IMR-90 (cell line): ENCODE measurements at regions of chr7 and their contacts with region 1.

Region 1: GRCh38 chr7:34133983-34134782 is 228.8 kb downstream of the BMPER start:
- DNase-seq: peak; percentile 84
- ATAC-seq: peak; percentile 82
- H3K4me3 ChIP-seq: no peak overlapping the region
- H3K27ac ChIP-seq: peak overlapping the region; percentile 79
- H3K4me1 ChIP-seq: peaks cover 13% of the 10 kb centered on the region; the same call in 1 of the 2 replicates
- H3K27me3 ChIP-seq: no peaks in the 10 kb centered on the region
- CTCF ChIP-seq: peak; percentile 91
- POLR2A ChIP-seq: peak; percentile 52; the same call in 1 of the 2 replicates
- RAD21 ChIP-seq: peak; percentile 96

Region 2: DNA sequence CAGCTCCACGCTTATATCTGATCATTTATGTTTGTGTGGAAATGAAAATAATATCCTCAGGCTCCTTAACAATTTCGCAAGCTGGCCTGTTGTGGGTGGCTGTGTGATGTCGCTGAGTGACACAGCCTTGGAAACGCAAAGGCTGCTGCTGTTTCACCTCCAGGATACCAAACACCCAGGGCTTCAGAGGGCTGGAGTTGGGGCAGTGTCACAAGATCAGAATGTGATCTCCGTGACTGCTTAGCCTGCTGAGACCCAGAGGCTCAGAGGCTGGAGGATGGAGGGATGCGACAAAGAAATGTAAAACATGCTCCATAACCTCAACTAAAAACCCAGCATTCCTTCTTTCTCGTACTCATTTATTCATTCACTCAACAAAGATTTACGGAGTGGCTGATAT is 266.0 kb before region 1 on chr7:
- CTCF ChIA-PET with region 1: no interaction called
- POLR2A ChIA-PET with region 1: no interaction called
- dilution Hi-C with region 1: no loop called
- in situ Hi-C with region 1: no loop called
- intact Hi-C with region 1: no loop called
- DNase-seq: peak; percentile 69
- ATAC-seq: peak; percentile 85
- H3K4me3 ChIP-seq: no peak overlapping the region
- H3K27ac ChIP-seq: no peak overlapping the region
- H3K4me1 ChIP-seq: peaks cover 4% of the 10 kb centered on the region
- H3K27me3 ChIP-seq: no peaks in the 10 kb centered on the region
- CTCF ChIP-seq: no peak
- POLR2A ChIP-seq: no peak
- RAD21 ChIP-seq: no peak

Region 3: DNA sequence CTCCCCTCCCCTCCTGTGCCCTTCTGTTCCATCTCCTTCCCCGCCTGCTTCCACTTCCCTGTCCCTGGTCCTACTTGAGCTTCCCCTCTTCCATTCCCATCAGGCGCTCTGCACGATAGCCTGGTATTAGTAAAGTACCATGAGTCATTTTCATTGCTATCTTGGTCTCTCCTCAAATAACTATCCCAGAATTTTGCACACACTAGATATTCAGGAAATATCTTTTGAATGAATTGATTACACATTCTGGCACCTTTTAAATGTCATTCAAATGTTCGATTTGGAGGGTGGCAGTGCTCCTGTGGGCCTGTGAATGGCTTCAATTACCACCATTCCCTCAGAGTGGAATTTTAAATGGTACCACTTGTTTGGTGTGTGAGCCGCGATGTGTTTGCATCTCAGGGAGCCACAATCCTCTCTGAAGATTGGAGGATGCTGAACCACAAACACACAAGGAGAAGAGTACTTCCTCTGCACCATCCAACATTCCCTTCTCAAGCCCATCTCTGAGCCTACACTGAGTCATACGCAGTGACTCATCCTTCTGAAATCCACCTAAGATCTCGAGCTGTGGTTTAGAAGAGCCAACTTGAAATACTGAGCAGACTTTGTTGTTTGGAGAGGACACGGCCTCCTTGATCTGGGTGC is 147.1 kb before region 1 on chr7:
- CTCF ChIA-PET with region 1: interaction called, 12 read pairs
- POLR2A ChIA-PET with region 1: no interaction called
- dilution Hi-C with region 1: no loop called
- in situ Hi-C with region 1: no loop called
- intact Hi-C with region 1: loop called (anchors 10 kb)
- DNase-seq: peak; percentile 100
- ATAC-seq: peak; percentile 94
- H3K4me3 ChIP-seq: no peak overlapping the region
- H3K27ac ChIP-seq: peak overlapping the region; percentile 83
- H3K4me1 ChIP-seq: peaks cover 6% of the 10 kb centered on the region
- H3K27me3 ChIP-seq: no peaks in the 10 kb centered on the region
- CTCF ChIP-seq: no peak
- POLR2A ChIP-seq: no peak
- RAD21 ChIP-seq: peak; percentile 6; the same call in 1 of the 2 replicates

Region 4: GRCh38 chr7:34165929-34166550 is 31.9 kb after region 1 on chr7:
- CTCF ChIA-PET with region 1: interaction called, 3 read pairs
- POLR2A ChIA-PET with region 1: no interaction called
- dilution Hi-C with region 1: no loop called
- in situ Hi-C with region 1: no loop called
- intact Hi-C with region 1: loop called (anchors 2 kb)
- DNase-seq: peak; percentile 60
- ATAC-seq: peak; percentile 82
- H3K4me3 ChIP-seq: no peak overlapping the region
- H3K27ac ChIP-seq: no peak overlapping the region
- H3K4me1 ChIP-seq: peaks cover 2% of the 10 kb centered on the region; the same call in 1 of the 2 replicates
- H3K27me3 ChIP-seq: no peaks in the 10 kb centered on the region
- CTCF ChIP-seq: peak; percentile 76
- POLR2A ChIP-seq: no peak
- RAD21 ChIP-seq: peak; percentile 74

Region 5: GRCh38 chr7:34184466-34184865 is 50.3 kb after region 1 on chr7:
- CTCF ChIA-PET with region 1: no interaction called
- POLR2A ChIA-PET with region 1: no interaction called
- dilution Hi-C with region 1: no loop called
- in situ Hi-C with region 1: no loop called
- intact Hi-C with region 1: no loop called
- DNase-seq: peak; percentile 53
- ATAC-seq: peak; percentile 75
- H3K4me3 ChIP-seq: no peak overlapping the region
- H3K27ac ChIP-seq: no peak overlapping the region
- H3K4me1 ChIP-seq: peaks cover 3% of the 10 kb centered on the region; the same call in 1 of the 2 replicates
- H3K27me3 ChIP-seq: no peaks in the 10 kb centered on the region; the same call in 1 of the 2 replicates
- CTCF ChIP-seq: 0 out of 2 replicates have a peak, but pooled peaks have one; percentile 14
- POLR2A ChIP-seq: no peak
- RAD21 ChIP-seq: no peak

Region 6: GRCh38 chr7:34315032-34315431 is 180.8 kb after region 1 on chr7:
- CTCF ChIA-PET with region 1: no interaction called
- POLR2A ChIA-PET with region 1: no interaction called
- dilution Hi-C with region 1: no loop called
- in situ Hi-C with region 1: loop called (anchors 10 kb)
- intact Hi-C with region 1: loop called (anchors 5 kb)
- DNase-seq: peak; percentile 83
- ATAC-seq: peak; percentile 78
- H3K4me3 ChIP-seq: no peak overlapping the region
- H3K27ac ChIP-seq: peak overlapping the region; percentile 43; the same call in 1 of the 2 replicates
- H3K4me1 ChIP-seq: peaks cover 7% of the 10 kb centered on the region; the same call in 1 of the 2 replicates
- H3K27me3 ChIP-seq: no peaks in the 10 kb centered on the region
- CTCF ChIP-seq: no peak
- POLR2A ChIP-seq: no peak
- RAD21 ChIP-seq: no peak

Region 7: DNA sequence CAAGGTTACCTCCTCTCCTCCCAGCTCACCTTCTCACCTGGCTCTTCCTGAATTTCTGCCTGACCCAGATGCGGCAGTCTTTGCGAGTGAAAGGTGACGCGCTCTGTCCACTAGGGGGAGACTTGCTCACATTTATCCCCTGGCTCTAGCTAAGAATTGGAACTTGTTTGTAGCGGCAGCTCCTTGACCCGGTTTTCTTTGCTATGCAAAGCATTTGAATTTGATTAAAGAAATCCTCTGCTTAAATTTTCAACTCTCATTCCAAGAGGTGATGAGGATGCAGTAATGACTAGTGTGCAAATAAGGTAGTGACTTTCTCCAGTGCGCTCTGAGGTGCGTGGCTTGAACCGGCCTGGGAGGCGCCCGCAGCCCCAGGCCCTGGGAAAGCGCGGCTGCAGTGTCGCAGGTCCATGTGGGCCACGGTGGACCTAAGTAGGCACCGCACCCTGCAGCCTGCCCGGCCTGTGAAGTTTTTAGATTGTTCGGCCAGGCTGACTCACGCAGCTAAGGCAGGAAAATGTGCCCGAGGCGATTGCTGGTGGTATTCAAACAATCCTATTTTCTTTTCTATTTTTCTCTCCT is 186.9 kb after region 1 on chr7:
- CTCF ChIA-PET with region 1: interaction called, 5 read pairs
- POLR2A ChIA-PET with region 1: no interaction called
- dilution Hi-C with region 1: no loop called
- in situ Hi-C with region 1: loop called (anchors 10 kb)
- intact Hi-C with region 1: loop called (anchors 5 kb)
- DNase-seq: peak; percentile 58
- ATAC-seq: peak; percentile 93
- H3K4me3 ChIP-seq: no peak overlapping the region
- H3K27ac ChIP-seq: no peak overlapping the region
- H3K4me1 ChIP-seq: peaks cover 5% of the 10 kb centered on the region
- H3K27me3 ChIP-seq: no peaks in the 10 kb centered on the region
- CTCF ChIP-seq: peak; percentile 80
- POLR2A ChIP-seq: no peak
- RAD21 ChIP-seq: peak; percentile 66

Region 8: DNA sequence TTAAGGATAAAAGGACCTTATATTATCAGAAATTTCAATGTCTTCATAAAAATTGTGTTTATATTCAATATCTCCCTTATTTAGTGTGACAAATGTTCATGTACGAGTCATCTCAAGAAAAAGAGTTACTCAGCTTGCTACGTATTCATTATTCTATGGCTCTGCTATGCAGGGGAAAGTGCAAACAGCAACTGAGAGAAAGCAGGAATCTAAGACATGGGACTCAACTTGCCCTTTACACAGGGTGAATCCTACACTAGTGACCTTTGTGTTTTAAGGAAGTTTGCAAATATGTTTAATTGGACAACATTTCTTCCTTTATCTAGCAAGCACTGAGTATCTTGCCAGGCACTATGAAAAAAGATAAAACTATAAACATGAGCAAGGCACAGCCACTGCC is 628.6 kb after region 1 on chr7:
- CTCF ChIA-PET with region 1: no interaction called
- POLR2A ChIA-PET with region 1: no interaction called
- dilution Hi-C with region 1: no loop called
- in situ Hi-C with region 1: no loop called
- intact Hi-C with region 1: no loop called
- DNase-seq: peak; percentile 0
- ATAC-seq: no peak
- H3K4me3 ChIP-seq: no peak overlapping the region
- H3K27ac ChIP-seq: no peak overlapping the region
- H3K4me1 ChIP-seq: no peaks in the 10 kb centered on the region
- H3K27me3 ChIP-seq: no peaks in the 10 kb centered on the region
- CTCF ChIP-seq: no peak
- POLR2A ChIP-seq: no peak
- RAD21 ChIP-seq: no peak

Region 9: GRCh38 chr7:34823640-34824258 is 689.6 kb after region 1 on chr7:
- CTCF ChIA-PET with region 1: no interaction called
- POLR2A ChIA-PET with region 1: interaction called, 3 read pairs
- dilution Hi-C with region 1: no loop called
- in situ Hi-C with region 1: no loop called
- intact Hi-C with region 1: loop called (anchors 2 kb)
- DNase-seq: peak; percentile 46
- ATAC-seq: peak; percentile 82
- H3K4me3 ChIP-seq: no peak overlapping the region
- H3K27ac ChIP-seq: no peak overlapping the region
- H3K4me1 ChIP-seq: no peaks in the 10 kb centered on the region
- H3K27me3 ChIP-seq: no peaks in the 10 kb centered on the region; the same call in 1 of the 2 replicates
- CTCF ChIP-seq: peak; percentile 80
- POLR2A ChIP-seq: no peak
- RAD21 ChIP-seq: peak; percentile 69

Region 10: GRCh38 chr7:35037526-35038339 is 903.5 kb after region 1 on chr7:
- CTCF ChIA-PET with region 1: no interaction called
- POLR2A ChIA-PET with region 1: no interaction called
- dilution Hi-C with region 1: no loop called
- in situ Hi-C with region 1: no loop called
- intact Hi-C with region 1: loop called (anchors 1 kb)
- DNase-seq: peak; percentile 94
- ATAC-seq: peak; percentile 93
- H3K4me3 ChIP-seq: peak overlapping the region; percentile 87
- H3K27ac ChIP-seq: peak overlapping the region; percentile 72
- H3K4me1 ChIP-seq: peaks cover 2% of the 10 kb centered on the region; the same call in 1 of the 2 replicates
- H3K27me3 ChIP-seq: peaks cover 4% of the 10 kb centered on the region; the same call in 1 of the 2 replicates
- CTCF ChIP-seq: peak; percentile 85
- POLR2A ChIP-seq: 0 out of 2 replicates have a peak, but pooled peaks have one; percentile 36
- RAD21 ChIP-seq: peak; percentile 61